PC-3 (cell line): ENCODE measurements at regions of chr7 and their contacts with region 1.

Region 1: DNA sequence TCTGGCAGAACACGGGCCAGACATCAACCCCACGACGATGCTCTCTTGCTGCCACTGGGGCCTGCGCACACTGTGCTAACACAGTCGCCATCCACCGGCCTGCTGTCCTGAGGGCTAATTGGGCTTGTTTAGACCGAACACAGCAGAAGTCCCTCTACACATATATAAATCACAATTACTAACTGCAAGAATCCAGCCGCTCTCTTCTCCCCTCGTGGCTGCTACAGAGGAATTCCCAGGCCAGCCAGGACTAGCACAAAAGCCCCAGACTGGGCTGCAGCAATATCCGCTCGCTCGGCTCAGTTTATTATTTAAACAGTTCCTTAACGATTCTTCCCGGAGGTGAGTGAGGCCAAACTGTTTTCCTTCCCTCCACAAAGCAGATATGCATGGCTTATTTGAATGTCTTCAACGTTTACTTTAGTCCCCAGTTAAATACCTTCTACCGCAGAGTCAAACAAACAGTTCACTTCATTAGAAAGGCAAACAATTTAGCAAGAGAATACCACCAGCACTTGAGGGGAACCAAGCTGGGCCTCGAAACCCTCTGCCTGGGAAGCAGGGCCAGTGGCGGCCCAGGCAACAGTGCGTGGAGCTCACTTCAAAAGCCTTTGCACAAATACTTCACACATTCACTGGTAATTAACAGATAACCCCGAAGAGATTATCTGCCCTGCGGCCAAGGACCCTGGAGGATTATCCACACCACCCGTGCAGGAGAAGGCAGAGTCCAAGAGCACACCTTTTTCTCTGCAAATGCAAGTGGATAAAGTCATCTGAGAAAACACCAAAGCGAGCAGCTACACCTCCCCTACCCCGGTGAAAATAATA is 145.3 kb downstream of the GLI3 start:
- DNase-seq: peak; percentile 81
- ATAC-seq: peak; percentile 77
- H3K4me3 ChIP-seq: no peak overlapping the region
- H3K27ac ChIP-seq: peak overlapping the region; percentile 96
- H3K4me1 ChIP-seq: peaks cover 56% of the 10 kb centered on the region
- H3K27me3 ChIP-seq: no peaks in the 10 kb centered on the region
- CTCF ChIP-seq: no peak

Region 2: DNA sequence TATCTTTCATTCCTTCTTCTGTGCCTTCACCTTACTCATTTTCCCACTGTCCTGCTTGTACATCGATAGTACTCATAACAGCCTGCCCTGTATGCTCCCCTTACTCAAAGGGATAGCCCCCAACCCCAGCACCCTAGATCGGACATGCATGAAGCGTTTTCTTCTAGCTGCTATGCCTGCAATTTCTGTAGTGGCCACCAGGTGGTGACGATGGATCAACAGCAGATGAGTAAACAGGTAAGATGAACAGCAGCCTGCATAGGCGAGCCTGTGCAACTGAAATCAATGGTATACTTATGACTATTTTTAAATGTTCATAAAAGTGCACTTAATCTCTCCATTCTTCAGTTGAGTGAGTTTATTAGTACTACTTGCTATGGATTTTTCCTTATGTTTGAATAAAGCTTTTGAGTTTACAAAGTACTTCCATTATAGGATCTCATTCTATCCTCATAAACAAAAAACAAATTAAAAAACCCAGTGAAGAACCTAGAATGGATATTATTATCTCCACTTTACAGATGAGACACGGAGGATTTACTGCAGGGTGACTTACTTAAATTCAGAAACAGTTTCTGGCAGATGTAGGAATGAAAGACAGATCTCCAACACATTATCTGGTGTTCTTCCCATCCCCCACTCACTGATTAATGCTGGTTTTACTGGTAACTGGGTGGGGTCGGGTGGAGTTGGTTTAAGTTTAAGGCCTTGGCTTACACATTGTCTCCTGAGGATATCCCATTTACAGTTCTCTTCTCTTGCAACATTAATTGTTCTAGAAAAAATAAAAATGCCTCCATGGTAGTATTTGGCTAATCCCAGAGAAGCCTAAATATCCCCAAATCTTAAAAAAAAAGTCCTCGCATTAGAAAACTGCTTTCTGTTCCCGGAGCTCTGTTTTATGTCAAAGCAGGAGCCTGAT is 76.8 kb before region 1 on chr7:
- CTCF ChIA-PET with region 1: no interaction called
- POLR2A ChIA-PET with region 1: no interaction called
- intact Hi-C with region 1: loop called (anchors 1 kb)
- DNase-seq: peak; percentile 79
- ATAC-seq: peak; percentile 83
- H3K4me3 ChIP-seq: no peak overlapping the region
- H3K27ac ChIP-seq: no peak overlapping the region; the same call in 1 of the 2 replicates
- H3K4me1 ChIP-seq: peaks cover 11% of the 10 kb centered on the region
- H3K27me3 ChIP-seq: no peaks in the 10 kb centered on the region
- CTCF ChIP-seq: peak; percentile 95

Region 3: GRCh38 chr7:42070043-42070675 is 21.5 kb before region 1 on chr7:
- CTCF ChIA-PET with region 1: no interaction called
- POLR2A ChIA-PET with region 1: no interaction called
- intact Hi-C with region 1: loop called (anchors 1 kb)
- DNase-seq: peak; percentile 92
- ATAC-seq: peak; percentile 90
- H3K4me3 ChIP-seq: no peak overlapping the region
- H3K27ac ChIP-seq: peak overlapping the region; percentile 78
- H3K4me1 ChIP-seq: peaks cover 25% of the 10 kb centered on the region
- H3K27me3 ChIP-seq: no peaks in the 10 kb centered on the region
- CTCF ChIP-seq: no peak

Region 4: GRCh38 chr7:42107484-42108245 is 16.0 kb after region 1 on chr7:
- CTCF ChIA-PET with region 1: interaction called, 3 read pairs
- POLR2A ChIA-PET with region 1: no interaction called
- intact Hi-C with region 1: loop called (anchors 1 kb)
- DNase-seq: peak; percentile 88
- ATAC-seq: peak; percentile 49
- H3K4me3 ChIP-seq: peak overlapping the region; percentile 45
- H3K27ac ChIP-seq: peak overlapping the region; percentile 94
- H3K4me1 ChIP-seq: peaks cover 57% of the 10 kb centered on the region
- H3K27me3 ChIP-seq: no peaks in the 10 kb centered on the region
- CTCF ChIP-seq: no peak

Region 5: GRCh38 chr7:42151309-42151708 is 59.6 kb after region 1 on chr7:
- CTCF ChIA-PET with region 1: no interaction called
- POLR2A ChIA-PET with region 1: no interaction called
- intact Hi-C with region 1: no loop called
- DNase-seq: no peak
- ATAC-seq: no peak
- H3K4me3 ChIP-seq: no peak overlapping the region
- H3K27ac ChIP-seq: no peak overlapping the region
- H3K4me1 ChIP-seq: no peaks in the 10 kb centered on the region; the same call in 1 of the 2 replicates
- H3K27me3 ChIP-seq: no peaks in the 10 kb centered on the region
- CTCF ChIP-seq: no peak

Region 6: DNA sequence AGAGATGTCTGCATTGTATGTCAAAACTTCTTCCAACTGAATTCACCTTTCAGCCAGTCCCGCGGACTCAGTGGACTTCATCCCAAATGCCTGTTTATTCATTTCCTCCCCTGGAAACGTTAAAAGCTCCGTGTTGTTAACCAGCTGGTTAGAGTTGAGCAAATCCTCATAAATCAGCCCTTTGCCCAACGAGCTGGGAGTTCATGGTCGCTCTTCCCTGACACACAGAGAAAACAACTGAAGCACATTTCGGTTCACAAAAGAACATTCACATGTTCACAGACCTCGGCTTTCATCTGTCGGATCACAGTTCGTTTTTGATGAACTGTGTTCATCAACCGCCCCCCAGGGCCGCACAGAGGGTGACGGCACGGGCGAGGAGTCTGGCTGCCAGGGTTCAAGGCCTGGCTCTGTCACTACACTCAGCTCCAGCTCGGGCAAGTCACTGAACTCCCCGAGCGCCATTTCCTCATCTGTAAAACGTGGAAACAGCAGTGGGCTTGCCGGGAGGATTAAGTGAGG is 82.8 kb after region 1 on chr7:
- CTCF ChIA-PET with region 1: no interaction called
- POLR2A ChIA-PET with region 1: no interaction called
- intact Hi-C with region 1: loop called (anchors 5 kb)
- DNase-seq: peak; percentile 84
- ATAC-seq: no peak
- H3K4me3 ChIP-seq: no peak overlapping the region
- H3K27ac ChIP-seq: peak overlapping the region; percentile 80
- H3K4me1 ChIP-seq: peaks cover 49% of the 10 kb centered on the region
- H3K27me3 ChIP-seq: no peaks in the 10 kb centered on the region
- CTCF ChIP-seq: no peak

Region 7: GRCh38 chr7:42208572-42208971 is 116.9 kb after region 1 on chr7:
- CTCF ChIA-PET with region 1: no interaction called
- POLR2A ChIA-PET with region 1: no interaction called
- intact Hi-C with region 1: no loop called
- DNase-seq: no peak
- ATAC-seq: no peak
- H3K4me3 ChIP-seq: no peak overlapping the region
- H3K27ac ChIP-seq: no peak overlapping the region
- H3K4me1 ChIP-seq: no peaks in the 10 kb centered on the region
- H3K27me3 ChIP-seq: no peaks in the 10 kb centered on the region
- CTCF ChIP-seq: no peak

Region 8: GRCh38 chr7:42237162-42237821 is 145.6 kb after region 1 on chr7 and contains the start of gene GLI3:
- CTCF ChIA-PET with region 1: no interaction called
- POLR2A ChIA-PET with region 1: no interaction called
- intact Hi-C with region 1: loop called (anchors 2 kb)
- DNase-seq: peak; percentile 88
- ATAC-seq: peak; percentile 72
- H3K4me3 ChIP-seq: peak within 1 kb of the TSS; percentile 92
- H3K27ac ChIP-seq: peak within 1 kb of the TSS; percentile 65
- H3K4me1 ChIP-seq: peaks cover 39% of the 10 kb centered on the region
- H3K27me3 ChIP-seq: no peaks in the 10 kb centered on the region
- CTCF ChIP-seq: no peak
- total RNA-seq, gene GLI3: 3.5 and 9.6 TPM in 2 replicates